ENCODE measurements at regions of chr1 and their contacts with region 1.

Region 1: DNA sequence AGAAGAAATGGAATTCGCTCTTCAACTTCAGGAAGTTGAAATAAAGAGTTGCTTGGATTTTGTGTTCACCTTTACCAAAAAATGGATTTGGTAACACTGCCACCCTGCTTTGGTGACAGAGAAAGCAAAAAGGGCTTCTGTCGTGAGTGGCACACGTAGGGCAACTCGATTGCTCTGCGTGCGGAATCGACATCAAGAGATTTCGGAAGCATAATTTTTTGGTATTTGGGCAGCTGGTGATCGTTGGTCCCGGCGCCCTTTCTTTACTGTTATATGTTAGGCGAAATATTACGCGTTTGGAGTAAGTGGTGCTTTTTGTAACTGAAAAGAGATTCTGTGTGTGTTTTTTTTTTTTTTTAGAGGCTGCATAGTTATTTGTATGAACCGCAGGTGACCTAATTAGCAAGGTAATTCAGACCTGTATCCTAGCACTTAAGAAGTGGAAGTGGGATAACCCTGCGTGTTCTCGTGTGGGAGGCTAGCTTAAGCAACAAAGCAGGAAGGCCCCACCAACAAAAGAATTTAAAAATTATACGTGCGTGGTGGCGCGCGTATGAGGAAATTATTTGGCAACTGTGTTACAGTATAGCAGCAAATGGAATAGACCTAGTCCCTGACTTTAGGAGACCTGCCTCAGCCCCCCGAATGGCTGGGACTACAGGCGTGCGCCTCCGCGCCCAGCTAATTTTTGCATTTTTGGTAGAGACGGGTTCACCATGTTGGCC is at the start of gene RNU11:
- DNase-seq: peak; percentile 74 to 98 (median 80)
- ATAC-seq: peak; percentile 81
- H3K4me3 ChIP-seq: peak within 1 kb of the TSS; percentile 28
- H3K27ac ChIP-seq: peak within 1 kb of the TSS; percentile 95
- H3K4me1 ChIP-seq: peaks cover 28 to 34% of the 10 kb centered on the region in 2 experiments; a peak in 4 of 5 replicates
- H3K27me3 ChIP-seq: no peaks in the 10 kb centered on the region
- CTCF ChIP-seq: peak; percentile 1 to 32 (median 7); a peak in 3 of 6 replicates
- EP300 ChIP-seq: peak; percentile 89
- POLR2A ChIP-seq: peak; percentile 100
- RAD21 ChIP-seq: peak; percentile 38 to 47
- polyA plus RNA-seq, gene RNU11: not detected

Region 2: GRCh38 chr1:28505406-28506187 is 143.0 kb before region 1 on chr1 and contains the start of gene RCC1:
- CTCF ChIA-PET with region 1: no interaction called
- POLR2A ChIA-PET with region 1: interaction called, 31 read pairs
- in situ Hi-C with region 1: no loop called
- intact Hi-C with region 1: no loop called
- DNase-seq: peak; percentile 95 to 99 (median 96)
- ATAC-seq: peak; percentile 81
- H3K4me3 ChIP-seq: peak within 1 kb of the TSS; percentile 87
- H3K27ac ChIP-seq: peak within 1 kb of the TSS; percentile 94
- H3K4me1 ChIP-seq: peaks cover 11 to 29% of the 10 kb centered on the region in 2 experiments; a peak in 4 of 5 replicates
- H3K27me3 ChIP-seq: no peaks in the 10 kb centered on the region
- CTCF ChIP-seq: no peak
- EP300 ChIP-seq: no peak; the same call in 1 of the 2 replicates
- POLR2A ChIP-seq: peak; percentile 100
- RAD21 ChIP-seq: 0 out of 4 replicates have a peak, but pooled peaks of 1 of the 2 experiments have one; percentile 10
- polyA plus RNA-seq, gene RCC1: 16.4 to 28.1 TPM

Region 3: DNA sequence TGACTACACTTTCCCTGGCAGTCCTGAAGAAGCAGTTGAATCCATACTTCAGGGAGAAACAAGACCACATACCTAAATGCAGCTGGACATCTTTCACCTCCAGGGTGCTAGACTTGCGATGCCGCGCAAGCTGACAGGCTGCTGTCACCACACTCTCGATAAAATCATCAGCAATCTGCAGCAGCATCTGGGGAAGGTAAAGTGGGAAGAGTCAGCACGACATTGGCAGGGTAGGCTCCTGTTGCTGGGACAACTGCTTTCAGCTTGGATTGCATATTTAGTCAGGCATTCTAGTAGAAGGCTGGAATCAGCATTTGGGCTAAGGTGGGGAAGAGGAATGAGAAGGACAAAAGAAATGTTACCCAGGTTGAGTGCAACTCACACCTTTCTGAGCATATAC is 35.5 kb before region 1 on chr1:
- CTCF ChIA-PET with region 1: no interaction called
- POLR2A ChIA-PET with region 1: interaction called, 13 read pairs
- in situ Hi-C with region 1: no loop called
- intact Hi-C with region 1: no loop called
- DNase-seq: no peak
- ATAC-seq: no peak
- H3K4me3 ChIP-seq: no peak overlapping the region
- H3K27ac ChIP-seq: no peak overlapping the region
- H3K4me1 ChIP-seq: no peaks in the 10 kb centered on the region
- H3K27me3 ChIP-seq: no peaks in the 10 kb centered on the region
- CTCF ChIP-seq: no peak
- EP300 ChIP-seq: no peak
- POLR2A ChIP-seq: no peak
- RAD21 ChIP-seq: no peak

Region 4: GRCh38 chr1:28718586-28719331 is 70.1 kb after region 1 on chr1:
- CTCF ChIA-PET with region 1: no interaction called
- POLR2A ChIA-PET with region 1: interaction called, 23 read pairs
- in situ Hi-C with region 1: no loop called
- intact Hi-C with region 1: no loop called
- DNase-seq: peak; percentile 57 to 80 (median 63)
- ATAC-seq: peak; percentile 83
- H3K4me3 ChIP-seq: no peak overlapping the region
- H3K27ac ChIP-seq: peak overlapping the region; percentile 66
- H3K4me1 ChIP-seq: peaks cover 0 to 17% of the 10 kb centered on the region in 2 experiments; a peak in 3 of 5 replicates
- H3K27me3 ChIP-seq: no peaks in the 10 kb centered on the region
- CTCF ChIP-seq: no peak
- EP300 ChIP-seq: no peak
- POLR2A ChIP-seq: no peak
- RAD21 ChIP-seq: no peak; a peak in 1 of 4 replicates

Region 5: GRCh38 chr1:28775121-28775944 is 126.7 kb after region 1 on chr1:
- CTCF ChIA-PET with region 1: no interaction called
- POLR2A ChIA-PET with region 1: interaction called, 12 read pairs
- in situ Hi-C with region 1: no loop called
- intact Hi-C with region 1: no loop called
- DNase-seq: peak in 2 of 4 experiments; percentile 24 to 42
- ATAC-seq: peak; percentile 34; the same call in 1 of the 3 replicates
- H3K4me3 ChIP-seq: no peak overlapping the region
- H3K27ac ChIP-seq: no peak overlapping the region
- H3K4me1 ChIP-seq: peaks cover 0 to 5% of the 10 kb centered on the region in 2 experiments; a peak in 2 of 5 replicates
- H3K27me3 ChIP-seq: no peaks in the 10 kb centered on the region
- CTCF ChIP-seq: no peak
- EP300 ChIP-seq: no peak
- POLR2A ChIP-seq: no peak
- RAD21 ChIP-seq: no peak

Region 6: DNA sequence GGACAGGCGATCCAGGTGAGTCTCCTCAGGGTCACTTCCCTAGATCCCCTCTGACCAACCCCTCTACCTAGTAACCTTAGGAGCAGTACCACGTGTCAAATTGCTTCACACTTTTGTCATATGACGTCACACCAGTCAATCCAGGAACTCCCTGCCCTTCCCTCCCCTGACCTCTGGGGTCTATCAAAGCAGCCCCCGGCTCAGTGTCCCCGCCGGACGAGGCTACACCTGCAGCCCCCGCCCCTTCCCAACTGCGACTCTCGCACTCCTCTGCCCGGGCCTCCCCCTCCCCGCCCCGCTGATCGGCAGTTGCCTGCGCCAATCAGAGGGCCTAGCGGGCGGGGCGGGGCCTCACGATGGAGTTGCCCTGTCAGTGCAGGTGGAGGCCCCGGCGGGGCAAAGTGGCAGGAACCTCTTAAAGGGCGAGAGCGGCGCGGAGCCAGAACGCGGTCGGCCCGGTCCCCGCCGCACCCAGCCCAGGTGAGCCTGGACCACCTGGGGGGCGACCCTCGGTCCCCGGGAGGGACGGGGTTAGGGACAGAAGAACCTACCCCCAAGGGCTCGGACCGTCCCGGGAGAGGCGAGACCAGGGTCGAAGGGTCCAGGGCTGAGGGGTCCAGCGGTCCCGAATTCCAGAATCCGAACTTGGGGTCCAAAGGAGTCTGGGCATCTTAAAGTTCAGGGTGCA is 238.2 kb after region 1 on chr1:
- CTCF ChIA-PET with region 1: no interaction called
- POLR2A ChIA-PET with region 1: interaction called, 29 read pairs
- in situ Hi-C with region 1: no loop called
- intact Hi-C with region 1: no loop called
- DNase-seq: peak; percentile 96 to 100 (median 99)
- ATAC-seq: peak; percentile 74
- H3K4me3 ChIP-seq: peak overlapping the region; percentile 81
- H3K27ac ChIP-seq: peak overlapping the region; percentile 87
- H3K4me1 ChIP-seq: peaks cover 63 to 87% of the 10 kb centered on the region in 2 experiments
- H3K27me3 ChIP-seq: no peaks in the 10 kb centered on the region
- CTCF ChIP-seq: no peak
- EP300 ChIP-seq: no peak
- POLR2A ChIP-seq: peak; percentile 82
- RAD21 ChIP-seq: no peak

Region 7: GRCh38 chr1:29675481-29676263 is 1027.0 kb after region 1 on chr1:
- CTCF ChIA-PET with region 1: no interaction called
- POLR2A ChIA-PET with region 1: no interaction called
- in situ Hi-C with region 1: no loop called
- intact Hi-C with region 1: no loop called
- DNase-seq: no peak
- ATAC-seq: no peak; the same call in 2 of the 3 replicates
- H3K4me3 ChIP-seq: no peak overlapping the region
- H3K27ac ChIP-seq: no peak overlapping the region
- H3K4me1 ChIP-seq: no peaks in the 10 kb centered on the region; a peak in 1 of 5 replicates
- H3K27me3 ChIP-seq: peaks cover 3 to 22% of the 10 kb centered on the region in 2 experiments
- CTCF ChIP-seq: no peak
- EP300 ChIP-seq: no peak
- POLR2A ChIP-seq: no peak
- RAD21 ChIP-seq: no peak

Measured in K562 (cell line).